PC-9 (cell line): ENCODE measurements at regions of chr6 and their contacts with region 1.

Region 1: GRCh38 chr6:144343701-144344428 is 58.7 kb downstream of the UTRN start:
- DNase-seq: no peak
- H3K4me3 ChIP-seq: no peak overlapping the region
- H3K27ac ChIP-seq: 0 out of 2 replicates have a peak overlapping the region, but pooled peaks have one; percentile 13
- H3K4me1 ChIP-seq: peaks cover 53% of the 10 kb centered on the region
- H3K27me3 ChIP-seq: no peaks in the 10 kb centered on the region
- CTCF ChIP-seq: no peak

Region 2: GRCh38 chr6:144377586-144378210 is 33.8 kb after region 1 on chr6:
- CTCF ChIA-PET with region 1: interaction called, 10 read pairs
- POLR2A ChIA-PET with region 1: no interaction called
- intact Hi-C with region 1: no loop called
- DNase-seq: no peak
- H3K4me3 ChIP-seq: no peak overlapping the region
- H3K27ac ChIP-seq: no peak overlapping the region
- H3K4me1 ChIP-seq: no peaks in the 10 kb centered on the region
- H3K27me3 ChIP-seq: no peaks in the 10 kb centered on the region
- CTCF ChIP-seq: no peak